ENCODE measurements at regions of chr2 and their contacts with region 1.

Region 1: DNA sequence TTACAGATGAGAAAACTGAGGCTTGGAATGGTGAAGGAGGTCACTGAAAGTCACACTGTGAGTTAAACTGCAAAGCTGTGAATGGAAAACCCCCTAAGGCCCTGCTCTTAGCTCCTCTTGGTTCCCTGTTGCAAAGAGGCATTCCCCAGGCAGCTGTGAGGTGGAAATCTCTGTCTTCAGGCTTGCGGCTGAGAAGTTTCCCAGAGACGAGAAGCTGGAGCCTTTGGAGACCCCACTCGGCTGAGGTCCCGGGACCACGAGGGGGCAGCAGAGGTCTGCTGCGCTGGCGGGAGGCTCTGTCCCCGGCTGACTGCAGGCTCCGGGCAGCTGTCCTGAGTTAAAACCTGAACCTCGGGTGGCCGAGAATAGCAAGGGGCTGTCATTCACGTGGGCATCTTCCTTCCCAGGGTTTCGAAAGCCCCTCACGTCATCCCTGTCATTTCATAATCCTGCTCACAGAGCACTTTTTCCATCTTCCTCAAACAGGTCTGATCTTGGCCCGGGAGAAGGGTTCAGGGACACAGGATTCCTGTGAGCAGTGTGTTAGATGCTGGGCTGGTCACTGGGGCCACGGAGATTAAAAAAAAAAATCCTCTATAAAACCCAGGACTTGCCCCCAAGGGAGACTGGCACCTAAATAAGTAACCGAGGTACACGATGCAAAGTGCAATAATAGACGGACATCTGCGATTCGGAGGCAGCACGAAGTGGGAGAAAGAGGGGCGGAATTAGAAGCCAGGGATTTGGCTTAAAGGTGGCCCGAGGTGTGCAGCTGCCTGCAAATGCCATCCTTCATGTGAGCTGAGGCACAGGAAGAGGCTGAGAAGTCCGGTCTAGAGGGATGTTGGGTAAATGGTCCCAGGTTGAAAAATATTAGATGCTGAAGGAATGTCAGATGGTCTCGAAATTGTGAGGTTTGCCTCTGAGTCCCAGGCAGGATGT is 24.6 kb upstream of the ATOH8 start:
- DNase-seq: peak; percentile 96

Region 2: DNA sequence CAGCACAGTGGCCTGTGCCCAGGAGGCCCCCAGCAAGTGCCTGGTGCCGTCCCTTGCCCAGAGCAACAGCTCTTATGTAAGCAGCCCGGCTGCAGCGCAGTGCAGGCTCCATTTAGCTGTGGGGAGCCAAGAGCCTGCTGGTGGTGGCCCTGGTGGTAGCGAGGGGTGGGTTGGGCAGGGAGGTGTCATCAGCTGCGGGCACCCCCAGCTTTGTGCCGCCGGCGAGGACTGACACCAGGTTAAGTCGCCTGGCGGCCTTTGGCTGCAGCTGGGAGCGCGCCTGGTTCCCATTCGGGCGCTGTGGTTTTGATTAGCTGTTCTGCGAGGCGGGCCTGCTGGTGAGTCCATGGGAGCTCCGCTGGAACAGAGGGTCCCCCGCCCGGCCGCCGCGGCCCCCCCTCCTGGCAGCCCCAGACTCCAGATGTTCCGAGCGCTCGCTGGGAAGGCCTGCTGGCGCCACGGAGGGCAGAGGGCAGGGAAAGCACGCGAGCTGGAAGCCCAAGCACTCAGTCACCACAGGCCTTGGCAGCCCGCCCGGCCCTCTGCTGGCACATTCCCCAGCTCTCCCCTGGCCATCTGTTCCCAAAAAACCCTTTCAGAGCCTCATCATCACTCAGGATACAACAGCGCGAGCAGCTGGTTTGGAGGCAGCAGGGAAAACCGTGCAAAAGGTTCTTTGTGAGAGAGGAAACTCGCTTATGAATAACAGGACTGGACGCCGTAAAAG is 43.0 kb after region 1 on chr2:
- intact Hi-C with region 1: no loop called
- DNase-seq: peak; percentile 99

Region 3: GRCh38 chr2:85797921-85798320 is 68.8 kb after region 1 on chr2:
- intact Hi-C with region 1: loop called in 1 of 2 experiments (anchors 5 kb)
- DNase-seq: no peak

Region 4: DNA sequence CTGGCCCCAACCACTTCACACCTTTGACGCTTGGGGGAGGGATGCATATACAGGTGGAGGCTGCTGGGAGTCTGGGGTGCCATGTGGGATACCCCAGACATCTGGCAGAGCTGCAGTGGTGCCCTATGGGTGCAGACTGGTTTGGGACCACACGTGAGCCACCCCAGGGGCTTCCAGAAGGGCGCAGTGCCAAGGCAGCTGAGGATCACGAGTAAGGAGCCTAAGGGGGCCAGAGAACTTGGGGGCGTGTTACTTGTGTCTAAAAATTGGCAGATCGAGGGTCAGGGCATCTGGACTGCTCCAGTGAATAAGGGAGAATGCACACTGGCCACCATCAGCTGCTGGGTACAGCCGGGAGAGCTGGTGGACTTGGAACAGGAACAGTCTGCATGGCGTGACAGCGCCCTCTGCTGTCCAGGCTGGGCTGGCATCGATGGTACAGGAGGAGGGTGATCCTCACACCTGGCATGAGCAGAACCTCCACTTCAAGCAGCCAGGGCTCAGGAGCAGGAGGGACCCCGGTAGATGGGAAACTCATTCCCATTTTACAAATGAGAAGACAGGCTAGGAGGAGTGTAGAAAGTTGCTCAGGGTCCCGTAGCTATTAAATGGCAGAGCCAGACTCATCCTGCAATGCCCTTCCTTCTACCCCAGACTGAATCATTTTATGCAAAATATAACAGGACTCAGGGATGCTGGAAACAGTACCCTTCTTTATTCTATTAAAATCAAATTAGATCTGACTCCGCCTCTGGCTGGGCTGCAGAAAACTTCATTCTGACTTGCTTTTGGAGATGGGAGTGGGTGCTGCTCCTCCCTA is 85.0 kb after region 1 on chr2:
- intact Hi-C with region 1: loop called (anchors 2 to 5 kb)
- DNase-seq: peak; percentile 97

Region 5: DNA sequence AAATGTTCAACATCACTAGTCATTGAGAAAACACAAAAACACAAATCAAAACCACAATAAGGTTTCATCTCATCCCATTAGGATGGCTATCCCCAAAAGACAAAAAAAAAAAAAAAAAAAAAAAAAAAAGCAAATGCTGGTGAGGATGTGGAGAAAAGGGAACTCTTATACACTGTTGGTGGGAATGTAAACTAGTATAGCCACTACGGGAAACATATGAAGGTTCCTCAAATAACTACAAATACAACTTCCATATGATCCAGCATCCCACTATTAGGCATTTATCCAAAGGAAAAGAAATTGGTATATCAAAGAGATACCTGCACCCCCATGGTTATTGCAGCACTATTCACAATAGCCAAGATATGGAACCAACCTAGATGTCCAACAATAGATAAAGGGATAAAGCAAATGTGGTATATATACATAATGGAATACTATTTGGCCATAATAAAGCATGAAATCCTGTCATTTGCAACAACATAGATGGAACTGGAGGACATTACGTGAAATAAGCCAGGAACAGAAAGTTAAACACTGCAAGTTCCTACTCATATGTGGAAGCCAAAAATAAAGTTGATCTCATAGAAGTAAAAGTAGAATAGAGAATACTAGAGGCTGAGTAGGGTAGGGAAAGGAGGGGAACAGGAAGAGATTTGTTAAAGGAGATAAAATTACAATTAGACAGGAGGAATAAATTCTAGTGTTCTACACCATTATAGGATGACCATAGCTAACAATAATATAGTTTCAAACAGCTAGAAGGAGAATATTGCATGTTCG is 368.2 kb after region 1 on chr2:
- intact Hi-C with region 1: loop called in 1 of 2 experiments (anchors 10 kb)
- DNase-seq: no peak

Region 6: DNA sequence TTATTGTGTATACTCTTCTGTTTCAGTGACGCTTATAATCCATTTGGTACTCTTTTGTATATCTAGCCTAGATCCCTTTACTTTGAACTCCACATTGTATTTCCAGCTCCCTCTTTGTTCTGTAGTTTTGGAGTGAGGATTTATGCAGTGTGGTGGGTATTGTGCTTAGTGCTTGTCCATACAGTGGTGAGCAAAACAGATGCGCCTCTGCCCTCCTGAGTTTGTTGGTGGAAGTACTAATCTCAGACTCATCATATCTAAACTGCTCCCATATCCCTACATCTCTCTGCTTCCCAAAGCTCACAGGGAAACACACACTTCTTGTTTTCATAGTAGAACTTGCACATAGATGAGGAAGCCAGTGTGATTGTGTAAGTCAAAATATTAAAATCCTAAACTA is 389.0 kb after region 1 on chr2:
- intact Hi-C with region 1: loop called in 1 of 2 experiments (anchors 1 kb)
- DNase-seq: no peak